Naive thymus-derived CD4-positive, alpha-beta T cell (primary cell): ENCODE measurements at regions of chr15 and their contacts with region 1.

Region 1: GRCh38 chr15:82985688-82986441 is at the start of gene RAMAC:
- DNase-seq: peak; percentile 70 to 97 (median 91)
- ATAC-seq: peak; percentile 93
- H3K4me3 ChIP-seq: peak within 1 kb of the TSS; percentile 90
- H3K4me3 Mint-ChIP-seq: peak within 1 kb of the TSS; percentile 84 to 100 (median 99)
- H3K27ac ChIP-seq: peak within 1 kb of the TSS; percentile 82
- H3K27ac Mint-ChIP-seq: peak within 1 kb of the TSS; percentile 73 to 99 (median 95)
- H3K4me1 ChIP-seq: peaks cover 14 to 18% of the 10 kb centered on the region in 2 donors
- H3K4me1 Mint-ChIP-seq: peaks cover 21 to 43% (median 35%) of the 10 kb centered on the region in 7 donors
- H3K27me3 ChIP-seq: no peaks in the 10 kb centered on the region
- H3K27me3 Mint-ChIP-seq: no peaks in the 10 kb centered on the region
- total RNA-seq, gene RAMAC: 14.2 to 27.7 (median 18.7) TPM

Region 2: GRCh38 chr15:82680200-82681102 is 305.4 kb before region 1 on chr15:
- CTCF ChIA-PET with region 1: no interaction called
- POLR2A ChIA-PET with region 1: interaction called, 9 read pairs
- intact Hi-C with region 1: loop called in 1 of 2 experiments (anchors 1 kb)
- DNase-seq: peak; percentile 47 to 88 (median 82)
- ATAC-seq: peak; percentile 98
- H3K4me3 ChIP-seq: peak overlapping the region; percentile 97
- H3K4me3 Mint-ChIP-seq: peak overlapping the region; percentile 82 to 96 (median 93)
- H3K27ac ChIP-seq: peak overlapping the region; percentile 83
- H3K27ac Mint-ChIP-seq: peak overlapping the region in 8 of 9 donors; percentile 91 to 97 (median 94)
- H3K4me1 ChIP-seq: peaks cover 9% of the 10 kb centered on the region in 2 donors
- H3K4me1 Mint-ChIP-seq: peaks cover 0 to 19% (median 14%) of the 10 kb centered on the region in 7 donors
- H3K27me3 ChIP-seq: no peaks in the 10 kb centered on the region
- H3K27me3 Mint-ChIP-seq: peaks cover 0 to 42% (median 0%) of the 10 kb centered on the region in 5 donors

Region 3: DNA sequence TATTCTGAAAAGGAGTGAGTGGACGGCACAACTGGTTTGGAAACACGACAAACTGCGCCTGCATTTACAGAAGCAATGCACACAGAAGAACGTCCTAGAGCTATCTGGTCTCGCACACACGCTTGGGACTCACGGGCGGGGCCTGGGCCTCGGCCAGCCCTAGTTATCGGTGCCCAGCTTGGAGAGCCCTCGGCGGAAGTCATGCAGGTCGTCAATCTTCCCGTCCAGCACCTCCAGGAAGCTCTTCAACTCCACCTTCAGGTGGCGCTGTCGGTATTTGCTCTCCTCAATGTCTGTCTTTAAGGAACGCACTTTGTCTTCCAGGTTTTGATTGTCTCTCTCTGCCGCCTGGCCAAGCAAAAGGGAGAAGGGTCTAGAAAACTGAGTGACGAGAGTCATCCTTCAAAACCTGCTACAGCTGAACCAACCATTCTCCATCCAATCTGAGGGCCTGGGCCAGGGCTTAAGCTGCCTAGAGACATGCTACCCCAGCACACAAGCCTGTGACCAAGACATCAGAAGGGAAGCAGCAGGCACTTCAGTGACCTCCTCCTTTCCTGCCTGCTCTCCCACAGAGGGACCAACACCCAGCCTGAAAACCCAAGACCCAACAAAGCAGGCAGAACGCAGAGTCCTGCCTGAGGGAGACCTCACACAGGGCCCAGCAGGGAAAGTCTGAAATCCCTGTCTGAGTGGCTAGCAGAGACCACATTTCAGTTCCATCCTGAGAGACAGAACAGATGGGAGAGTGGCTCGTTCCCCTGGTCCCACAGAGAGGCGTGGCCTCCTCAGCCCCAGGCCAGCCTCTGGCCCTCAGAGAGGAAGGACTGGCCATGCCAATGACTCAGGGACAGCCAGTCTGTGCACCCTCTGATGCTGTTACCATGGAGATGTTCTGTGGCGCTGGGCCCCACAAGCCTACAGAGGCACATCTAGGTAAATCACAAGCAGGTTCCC is 136.0 kb before region 1 on chr15:
- CTCF ChIA-PET with region 1: no interaction called
- POLR2A ChIA-PET with region 1: no interaction called
- intact Hi-C with region 1: loop called in 1 of 2 experiments (anchors 5 kb)
- DNase-seq: peak; percentile 12 to 53 (median 33)
- ATAC-seq: peak; percentile 78
- H3K4me3 ChIP-seq: no peak overlapping the region
- H3K4me3 Mint-ChIP-seq: no peak overlapping the region
- H3K27ac ChIP-seq: no peak overlapping the region
- H3K27ac Mint-ChIP-seq: peak overlapping the region in 3 of 9 donors; percentile 36 to 70 (median 56)
- H3K4me1 ChIP-seq: no peaks in the 10 kb centered on the region
- H3K4me1 Mint-ChIP-seq: peaks cover 11 to 29% (median 20%) of the 10 kb centered on the region in 7 donors
- H3K27me3 ChIP-seq: no peaks in the 10 kb centered on the region
- H3K27me3 Mint-ChIP-seq: peaks cover 0 to 18% (median 0%) of the 10 kb centered on the region in 5 donors

Region 4: DNA sequence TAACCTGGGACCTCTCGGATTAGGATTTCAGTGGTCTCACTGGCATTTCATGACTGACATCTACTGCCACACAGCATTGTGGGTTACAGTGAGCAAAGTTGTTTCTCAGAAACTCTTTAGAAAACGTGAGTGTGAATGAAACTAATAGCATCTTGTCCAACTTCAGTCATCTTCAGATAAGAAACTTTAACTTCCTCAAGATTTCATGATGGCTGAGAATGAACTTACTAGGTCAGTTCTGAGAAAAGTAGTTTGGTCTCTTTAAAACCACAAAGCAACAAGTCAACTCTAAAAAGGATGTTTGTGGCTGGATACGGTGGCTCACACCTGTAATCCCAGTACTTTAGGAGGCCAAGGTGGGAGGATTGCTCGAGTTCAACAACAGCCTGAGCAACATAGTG is 19.2 kb before region 1 on chr15:
- CTCF ChIA-PET with region 1: no interaction called
- POLR2A ChIA-PET with region 1: no interaction called
- intact Hi-C with region 1: loop called in 1 of 2 experiments (anchors 2 kb)
- DNase-seq: peak in 1 of 9 donors; percentile 28
- ATAC-seq: no peak
- H3K4me3 ChIP-seq: no peak overlapping the region
- H3K4me3 Mint-ChIP-seq: peak overlapping the region in 1 of 10 donors; percentile 40
- H3K27ac ChIP-seq: no peak overlapping the region
- H3K27ac Mint-ChIP-seq: peak overlapping the region in 1 of 9 donors; percentile 63
- H3K4me1 ChIP-seq: no peaks in the 10 kb centered on the region
- H3K4me1 Mint-ChIP-seq: peaks cover 0 to 25% (median 0%) of the 10 kb centered on the region in 7 donors
- H3K27me3 ChIP-seq: no peaks in the 10 kb centered on the region
- H3K27me3 Mint-ChIP-seq: peaks cover 0 to 30% (median 0%) of the 10 kb centered on the region in 5 donors